CD8-positive, alpha-beta T cell (primary cell): ENCODE measurements at regions of chr11 and their contacts with region 1.

Region 1: GRCh38 chr11:96342961-96343711 is at the start of gene MAML2:
- DNase-seq: peak; percentile 82 to 97 (median 89)
- ATAC-seq: peak; percentile 85
- H3K4me3 ChIP-seq: peak within 1 kb of the TSS; percentile 88 to 98
- H3K4me3 Mint-ChIP-seq: peak within 1 kb of the TSS; percentile 98
- H3K27ac ChIP-seq: peak within 1 kb of the TSS; percentile 66 to 83
- H3K27ac Mint-ChIP-seq: peak within 1 kb of the TSS; percentile 91
- H3K4me1 ChIP-seq: peaks cover 16% of the 10 kb centered on the region
- H3K4me1 Mint-ChIP-seq: peaks cover 39% of the 10 kb centered on the region
- H3K27me3 ChIP-seq: no peaks in the 10 kb centered on the region
- H3K27me3 Mint-ChIP-seq: no peaks in the 10 kb centered on the region
- CTCF ChIP-seq: peak; percentile 88
- total RNA-seq, gene MAML2: 41.2 to 42.3 TPM

Region 2: GRCh38 chr11:96062134-96062533 is 281.0 kb before region 1 on chr11:
- CTCF ChIA-PET with region 1: interaction called, 98 read pairs
- POLR2A ChIA-PET with region 1: interaction called, 4 read pairs
- intact Hi-C with region 1: no loop called
- DNase-seq: peak in 3 of 9 experiments; percentile 27 to 57 (median 33)
- ATAC-seq: peak; percentile 98
- H3K4me3 ChIP-seq: no peak overlapping the region
- H3K4me3 Mint-ChIP-seq: no peak overlapping the region
- H3K27ac ChIP-seq: no peak overlapping the region
- H3K27ac Mint-ChIP-seq: peak overlapping the region; percentile 79
- H3K4me1 ChIP-seq: peaks cover 34% of the 10 kb centered on the region
- H3K4me1 Mint-ChIP-seq: peaks cover 62% of the 10 kb centered on the region
- H3K27me3 ChIP-seq: no peaks in the 10 kb centered on the region
- H3K27me3 Mint-ChIP-seq: no peaks in the 10 kb centered on the region
- CTCF ChIP-seq: no peak

Region 3: GRCh38 chr11:96188243-96189006 is 154.7 kb before region 1 on chr11:
- CTCF ChIA-PET with region 1: interaction called, 22 read pairs
- POLR2A ChIA-PET with region 1: no interaction called
- intact Hi-C with region 1: loop called in 1 of 2 experiments (anchors 5 kb)
- DNase-seq: peak in 2 of 9 experiments; percentile 26 to 35
- ATAC-seq: no peak
- H3K4me3 ChIP-seq: no peak overlapping the region
- H3K4me3 Mint-ChIP-seq: peak overlapping the region; percentile 42
- H3K27ac ChIP-seq: peak overlapping the region in 1 of 2 experiments; percentile 23
- H3K27ac Mint-ChIP-seq: peak overlapping the region; percentile 75
- H3K4me1 ChIP-seq: peaks cover 55% of the 10 kb centered on the region
- H3K4me1 Mint-ChIP-seq: peaks cover 78% of the 10 kb centered on the region
- H3K27me3 ChIP-seq: no peaks in the 10 kb centered on the region
- H3K27me3 Mint-ChIP-seq: no peaks in the 10 kb centered on the region
- CTCF ChIP-seq: no peak

Region 4: DNA sequence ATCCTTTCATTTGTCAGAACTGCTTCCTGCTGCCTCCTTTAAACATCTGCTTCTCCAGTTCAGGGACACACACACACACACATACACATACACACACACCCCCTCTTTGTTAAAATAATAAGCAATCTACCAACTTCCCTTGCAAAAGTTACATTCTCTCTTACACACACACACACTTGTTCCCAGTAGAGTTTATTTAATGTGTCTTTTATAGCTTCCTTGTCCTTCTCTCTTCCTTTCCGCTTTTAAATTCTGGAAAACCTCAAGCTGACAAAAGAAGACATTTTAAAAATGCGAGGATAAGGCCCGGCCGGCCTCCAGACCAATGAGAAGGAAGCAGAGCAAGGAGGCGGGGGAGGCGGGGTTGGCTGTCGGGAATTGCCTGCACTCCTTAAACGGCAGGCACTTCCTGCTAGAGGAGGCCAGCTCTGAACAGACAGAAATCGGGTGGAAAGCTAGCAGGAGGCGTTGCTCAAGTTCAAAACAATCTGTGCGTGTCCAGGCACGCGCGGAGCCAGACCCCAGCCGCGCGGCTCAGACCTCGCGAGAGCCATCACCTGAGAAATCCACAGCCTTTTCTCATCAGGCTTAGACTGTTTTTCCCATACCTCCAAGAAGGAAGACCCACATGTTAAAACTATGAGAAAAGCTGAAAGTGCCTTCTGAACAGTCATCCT is 100.0 kb before region 1 on chr11:
- CTCF ChIA-PET with region 1: interaction called, 48 read pairs
- POLR2A ChIA-PET with region 1: interaction called, 3 read pairs
- intact Hi-C with region 1: loop called in 1 of 2 experiments (anchors 2 kb)
- DNase-seq: peak; percentile 40 to 87 (median 71)
- ATAC-seq: peak; percentile 87
- H3K4me3 ChIP-seq: peak overlapping the region; percentile 55 to 61
- H3K4me3 Mint-ChIP-seq: peak overlapping the region; percentile 87
- H3K27ac ChIP-seq: peak overlapping the region; percentile 46 to 68
- H3K27ac Mint-ChIP-seq: peak overlapping the region; percentile 86
- H3K4me1 ChIP-seq: peaks cover 54% of the 10 kb centered on the region
- H3K4me1 Mint-ChIP-seq: peaks cover 62% of the 10 kb centered on the region
- H3K27me3 ChIP-seq: no peaks in the 10 kb centered on the region
- H3K27me3 Mint-ChIP-seq: no peaks in the 10 kb centered on the region
- CTCF ChIP-seq: no peak

Region 5: GRCh38 chr11:96306933-96307775 is 36.0 kb before region 1 on chr11:
- CTCF ChIA-PET with region 1: interaction called, 60 read pairs
- POLR2A ChIA-PET with region 1: interaction called, 6 read pairs
- intact Hi-C with region 1: loop called (anchors 2 kb)
- DNase-seq: peak in 4 of 9 experiments; percentile 10 to 50 (median 26)
- ATAC-seq: peak; percentile 61
- H3K4me3 ChIP-seq: peak overlapping the region in 1 of 2 experiments; percentile 5
- H3K4me3 Mint-ChIP-seq: peak overlapping the region; percentile 78
- H3K27ac ChIP-seq: peak overlapping the region in 1 of 2 experiments; percentile 3
- H3K27ac Mint-ChIP-seq: peak overlapping the region; percentile 84
- H3K4me1 ChIP-seq: peaks cover 41% of the 10 kb centered on the region
- H3K4me1 Mint-ChIP-seq: peaks cover 83% of the 10 kb centered on the region
- H3K27me3 ChIP-seq: no peaks in the 10 kb centered on the region
- H3K27me3 Mint-ChIP-seq: no peaks in the 10 kb centered on the region
- CTCF ChIP-seq: no peak

Region 6: GRCh38 chr11:96424693-96425092 is 81.6 kb after region 1 on chr11:
- CTCF ChIA-PET with region 1: interaction called, 12 read pairs
- POLR2A ChIA-PET with region 1: no interaction called
- intact Hi-C with region 1: loop called in 1 of 2 experiments (anchors 1 kb)
- DNase-seq: no peak
- ATAC-seq: no peak
- H3K4me3 ChIP-seq: no peak overlapping the region
- H3K4me3 Mint-ChIP-seq: no peak overlapping the region
- H3K27ac ChIP-seq: no peak overlapping the region
- H3K27ac Mint-ChIP-seq: no peak overlapping the region
- H3K4me1 ChIP-seq: no peaks in the 10 kb centered on the region
- H3K4me1 Mint-ChIP-seq: no peaks in the 10 kb centered on the region
- H3K27me3 ChIP-seq: no peaks in the 10 kb centered on the region
- H3K27me3 Mint-ChIP-seq: peaks cover 28% of the 10 kb centered on the region
- CTCF ChIP-seq: no peak